ENCODE measurements at regions of chr2 and their contacts with region 1.

Region 1: GRCh38 chr2:216034065-216034464 is 20.7 kb upstream of the MREG start:
- DNase-seq: peak; percentile 92
- ATAC-seq: peak; percentile 76
- H3K4me3 Mint-ChIP-seq: no peak overlapping the region
- H3K27ac Mint-ChIP-seq: no peak overlapping the region
- H3K4me1 Mint-ChIP-seq: peaks cover 44% of the 10 kb centered on the region
- H3K27me3 Mint-ChIP-seq: no peaks in the 10 kb centered on the region
- CTCF ChIP-seq: peak; percentile 87

Region 2: GRCh38 chr2:215949991-215950404 is 84.1 kb before region 1 on chr2:
- CTCF ChIA-PET with region 1: interaction called, 10 read pairs
- POLR2A ChIA-PET with region 1: no interaction called
- intact Hi-C with region 1: no loop called
- DNase-seq: no peak
- ATAC-seq: peak; percentile 84
- H3K4me3 Mint-ChIP-seq: no peak overlapping the region
- H3K27ac Mint-ChIP-seq: no peak overlapping the region
- H3K4me1 Mint-ChIP-seq: peaks cover 2% of the 10 kb centered on the region
- H3K27me3 Mint-ChIP-seq: no peaks in the 10 kb centered on the region
- CTCF ChIP-seq: peak; percentile 5

Region 3: GRCh38 chr2:216023055-216023648 is 10.9 kb before region 1 on chr2:
- CTCF ChIA-PET with region 1: interaction called, 67 read pairs
- POLR2A ChIA-PET with region 1: interaction called, 7 read pairs
- intact Hi-C with region 1: no loop called
- DNase-seq: peak; percentile 70
- ATAC-seq: peak; percentile 96
- H3K4me3 Mint-ChIP-seq: no peak overlapping the region
- H3K27ac Mint-ChIP-seq: no peak overlapping the region
- H3K4me1 Mint-ChIP-seq: peaks cover 8% of the 10 kb centered on the region
- H3K27me3 Mint-ChIP-seq: no peaks in the 10 kb centered on the region
- CTCF ChIP-seq: peak; percentile 70

Region 4: DNA sequence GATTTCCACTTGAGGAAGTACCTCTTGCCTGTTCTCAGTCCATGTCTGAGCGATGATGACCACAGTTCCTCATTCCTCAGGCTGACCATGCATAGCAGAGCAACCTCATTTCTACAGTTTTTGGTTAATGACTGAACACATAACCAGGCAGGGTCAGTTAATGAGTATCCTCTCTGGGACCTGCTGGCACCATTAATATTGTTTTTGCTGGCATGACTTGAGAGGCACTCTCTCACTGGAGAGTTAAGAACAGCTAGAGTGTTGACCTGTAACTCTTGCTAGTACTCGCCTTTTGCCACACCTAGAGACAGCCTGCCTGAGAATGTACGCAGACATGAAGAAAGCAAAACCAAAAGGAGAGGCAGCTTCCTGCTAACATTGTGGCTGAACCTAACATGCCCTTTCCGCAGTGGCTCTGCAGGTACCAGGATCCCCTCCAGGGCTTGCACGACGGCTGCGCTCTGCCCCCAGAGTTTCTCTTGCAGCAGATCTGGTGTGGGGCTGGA is 23.7 kb after region 1 on chr2:
- CTCF ChIA-PET with region 1: interaction called, 49 read pairs
- POLR2A ChIA-PET with region 1: interaction called, 3 read pairs
- intact Hi-C with region 1: no loop called
- DNase-seq: peak; percentile 80
- ATAC-seq: peak; percentile 98
- H3K4me3 Mint-ChIP-seq: peak overlapping the region; percentile 67
- H3K27ac Mint-ChIP-seq: peak overlapping the region; percentile 87
- H3K4me1 Mint-ChIP-seq: peaks cover 33% of the 10 kb centered on the region
- H3K27me3 Mint-ChIP-seq: no peaks in the 10 kb centered on the region
- CTCF ChIP-seq: no peak

Region 5: DNA sequence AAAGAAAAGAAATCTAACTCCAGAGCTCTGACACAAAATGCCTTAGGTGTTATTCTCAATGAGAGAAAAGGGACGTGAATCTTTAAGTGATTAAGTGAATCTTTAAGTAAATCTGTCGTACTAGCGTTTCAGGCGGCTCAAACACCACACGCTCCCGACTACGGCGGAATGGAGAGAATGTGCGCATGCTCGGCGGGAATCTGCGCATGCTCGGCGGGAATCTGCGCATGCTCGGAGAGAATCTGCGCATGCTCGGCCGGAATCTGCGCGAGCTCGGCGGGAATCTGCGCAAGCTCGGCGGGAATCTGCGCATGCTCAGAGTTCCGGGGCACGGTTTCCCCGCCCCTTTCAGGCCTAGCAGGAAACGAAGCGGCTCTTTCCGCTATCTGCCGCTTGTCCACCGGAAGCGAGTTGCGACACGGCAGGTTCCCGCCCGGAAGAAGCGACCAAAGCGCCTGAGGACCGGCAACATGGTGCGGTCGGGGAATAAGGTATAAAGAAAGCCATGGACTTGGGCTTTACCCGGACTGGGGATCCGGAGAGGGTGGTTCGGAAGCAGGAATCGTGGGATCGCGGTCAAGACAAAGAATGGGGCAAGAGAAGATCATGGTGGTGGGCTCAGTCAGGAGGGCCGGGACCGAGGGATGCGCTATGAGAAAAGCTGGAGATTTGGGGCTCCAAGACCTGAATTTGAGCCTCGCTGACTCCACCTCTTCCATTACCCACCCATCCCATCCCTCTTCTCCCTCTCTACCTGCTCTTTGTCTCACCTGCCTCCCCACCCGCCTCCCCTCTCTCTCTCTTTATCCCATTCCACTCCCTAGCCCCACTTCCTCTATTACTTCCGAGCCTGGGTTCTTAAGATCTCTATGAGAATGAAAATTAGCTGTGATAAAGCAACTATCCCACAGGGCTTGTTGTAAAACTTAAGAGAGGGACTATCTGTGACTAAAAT is 75.2 kb after region 1 on chr2 and contains the start of gene XRCC5:
- CTCF ChIA-PET with region 1: interaction called, 40 read pairs
- POLR2A ChIA-PET with region 1: interaction called, 17 read pairs
- intact Hi-C with region 1: loop called (anchors 5 kb)
- DNase-seq: peak; percentile 98
- ATAC-seq: peak; percentile 81
- H3K4me3 Mint-ChIP-seq: peak within 1 kb of the TSS; percentile 96
- H3K27ac Mint-ChIP-seq: peak within 1 kb of the TSS; percentile 98
- H3K4me1 Mint-ChIP-seq: peaks cover 42% of the 10 kb centered on the region
- H3K27me3 Mint-ChIP-seq: no peaks in the 10 kb centered on the region
- CTCF ChIP-seq: no peak
- total RNA-seq, gene XRCC5: 541 to 544 TPM